ENCODE measurements at regions of chr9 and their contacts with region 1.

Region 1: DNA sequence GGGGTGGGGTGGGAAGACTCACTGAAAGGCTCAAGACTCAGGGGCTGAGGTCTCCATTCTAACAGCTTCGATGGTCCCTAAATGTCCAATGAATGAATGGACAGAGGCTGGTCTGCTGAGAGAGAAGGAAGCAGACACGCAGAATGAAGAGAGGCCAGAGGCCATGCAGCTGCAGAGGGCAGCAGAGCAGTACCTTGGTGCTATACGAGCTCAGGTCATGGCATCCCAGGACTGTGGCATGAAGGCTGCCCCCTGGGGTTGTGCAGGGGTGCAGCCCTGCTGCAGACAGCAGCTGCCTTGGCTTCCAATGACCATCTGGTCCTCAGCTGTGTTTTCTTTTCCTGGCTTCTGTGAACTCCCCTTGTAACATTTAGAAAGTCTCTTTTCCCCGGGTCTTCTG is 15.2 kb upstream of the CORO2A start:
- DNase-seq: no peak
- ATAC-seq: no peak
- H3K4me3 ChIP-seq: no peak overlapping the region
- H3K27ac ChIP-seq: no peak overlapping the region
- H3K4me1 ChIP-seq: peaks cover 0 to 9% (median 1%) of the 10 kb centered on the region in 12 donors
- H3K27me3 ChIP-seq: no peaks in the 10 kb centered on the region
- CTCF ChIP-seq: no peak
- POLR2A ChIP-seq: no peak

Region 2: DNA sequence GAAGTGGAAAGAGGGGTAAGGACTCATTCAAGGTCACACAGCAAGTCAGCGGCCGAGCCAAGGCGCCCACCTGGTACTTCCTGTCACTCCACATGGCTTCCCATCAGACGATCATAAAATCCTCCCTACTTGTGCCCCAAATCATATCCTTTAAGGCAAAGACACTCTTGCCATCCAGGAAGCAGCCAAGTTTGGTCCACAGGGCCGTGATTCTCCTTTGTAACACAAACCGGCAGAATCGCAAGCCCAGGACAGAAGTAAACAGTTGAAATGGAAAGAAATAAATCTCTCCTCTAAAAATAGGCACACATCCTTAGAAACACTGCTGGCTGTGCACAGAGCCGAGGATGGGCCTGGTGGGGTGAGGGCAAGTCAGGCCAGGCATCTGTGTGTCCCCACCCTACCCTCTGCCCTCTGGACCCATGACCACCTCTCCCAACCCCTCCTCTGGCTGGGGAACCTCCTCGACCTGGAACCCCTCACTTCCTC is 675.7 kb before region 1 on chr9:
- intact Hi-C with region 1: no loop called
- DNase-seq: peak in 1 of 5 donors; percentile 30
- ATAC-seq: peak in 3 of 4 donors; percentile 3 to 24 (median 21)
- H3K4me3 ChIP-seq: no peak overlapping the region
- H3K27ac ChIP-seq: peak overlapping the region in 11 of 12 donors; percentile 44 to 91 (median 73)
- H3K4me1 ChIP-seq: peaks cover 0 to 71% (median 40%) of the 10 kb centered on the region in 12 donors
- H3K27me3 ChIP-seq: no peaks in the 10 kb centered on the region
- CTCF ChIP-seq: no peak
- POLR2A ChIP-seq: no peak

Region 3: GRCh38 chr9:98074115-98074990 is 133.3 kb before region 1 on chr9:
- intact Hi-C with region 1: loop called in 4 of 10 experiments (anchors 5 to 10 kb)
- DNase-seq: peak; percentile 41 to 70 (median 47)
- ATAC-seq: peak in 3 of 4 donors; percentile 33 to 62 (median 56)
- H3K4me3 ChIP-seq: no peak overlapping the region
- H3K27ac ChIP-seq: peak overlapping the region in 2 of 12 donors; percentile 23 to 37
- H3K4me1 ChIP-seq: peaks cover 0 to 21% (median 6%) of the 10 kb centered on the region in 12 donors
- H3K27me3 ChIP-seq: no peaks in the 10 kb centered on the region
- CTCF ChIP-seq: peak; percentile 81 to 98 (median 94)
- POLR2A ChIP-seq: no peak

Region 4: GRCh38 chr9:98438666-98439065 is 231.1 kb after region 1 on chr9:
- intact Hi-C with region 1: no loop called
- DNase-seq: no peak
- ATAC-seq: no peak
- H3K4me3 ChIP-seq: no peak overlapping the region
- H3K27ac ChIP-seq: no peak overlapping the region
- H3K4me1 ChIP-seq: no peaks in the 10 kb centered on the region
- H3K27me3 ChIP-seq: peaks cover 0 to 12% (median 0%) of the 10 kb centered on the region in 9 donors
- CTCF ChIP-seq: no peak
- POLR2A ChIP-seq: no peak

Region 5: DNA sequence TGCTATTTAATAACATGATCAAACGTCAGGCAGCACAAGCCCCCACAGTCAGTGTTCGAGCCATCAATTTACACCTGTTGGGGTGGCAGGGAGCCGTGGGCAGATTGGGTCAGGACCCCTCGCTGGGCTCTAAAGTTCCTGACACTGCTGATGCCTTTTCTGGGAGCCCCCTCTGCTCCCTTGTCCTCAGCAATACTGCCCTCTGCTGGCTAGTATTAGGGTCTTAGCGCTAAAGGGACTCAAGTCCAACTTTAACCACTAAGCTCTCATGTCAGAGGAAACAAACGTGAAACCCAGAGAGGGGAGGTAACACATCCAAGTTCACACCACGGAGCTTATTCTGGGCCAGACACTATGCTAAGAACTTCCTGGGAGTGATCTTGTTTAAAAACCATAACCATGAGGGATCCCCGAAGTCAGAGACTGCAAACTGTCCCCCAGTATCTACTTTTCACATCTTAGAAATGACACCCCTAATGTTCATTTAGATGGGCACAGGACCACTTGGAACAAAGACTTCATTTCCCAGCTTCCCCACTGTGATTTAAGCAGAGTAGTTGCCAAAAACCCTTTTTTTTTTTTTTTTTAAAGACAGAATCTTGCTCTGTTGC is 568.3 kb after region 1 on chr9:
- intact Hi-C with region 1: loop called in 2 of 10 experiments (anchors 10 kb)
- DNase-seq: peak in 1 of 5 donors; percentile 35
- ATAC-seq: peak in 1 of 4 donors; percentile 49
- H3K4me3 ChIP-seq: no peak overlapping the region
- H3K27ac ChIP-seq: no peak overlapping the region
- H3K4me1 ChIP-seq: no peaks in the 10 kb centered on the region
- H3K27me3 ChIP-seq: no peaks in the 10 kb centered on the region
- CTCF ChIP-seq: peak; percentile 47 to 81 (median 69)
- POLR2A ChIP-seq: no peak

Region 6: DNA sequence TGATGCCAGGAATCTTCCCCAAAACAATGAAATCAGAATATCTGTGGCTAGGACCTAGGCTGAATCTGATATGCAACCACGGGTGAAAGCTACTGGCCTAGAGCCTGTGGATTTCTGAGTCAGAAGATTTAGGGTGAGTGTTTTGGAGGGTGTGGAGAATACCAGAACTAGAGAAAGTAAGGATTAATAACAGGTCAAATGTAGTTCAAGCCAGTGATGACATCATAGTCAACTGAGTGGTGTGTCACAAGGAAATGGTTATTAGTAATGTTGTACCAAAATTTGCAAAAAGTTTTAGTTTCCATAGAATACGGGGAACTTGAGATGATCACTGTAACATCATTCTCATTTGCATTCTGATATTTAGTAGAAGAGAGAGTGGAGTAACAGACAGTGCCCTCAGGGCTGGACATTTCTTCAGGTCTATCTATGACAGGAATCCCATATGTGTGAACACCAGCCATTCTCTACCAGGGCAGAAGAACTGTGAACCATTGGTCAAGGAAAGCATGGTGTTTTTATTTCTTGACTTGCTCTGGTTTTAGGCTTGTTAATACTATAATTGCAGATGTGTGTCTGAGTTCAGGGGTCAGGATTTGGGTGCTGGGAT is 603.5 kb after region 1 on chr9:
- intact Hi-C with region 1: no loop called
- DNase-seq: no peak
- ATAC-seq: no peak
- H3K4me3 ChIP-seq: no peak overlapping the region
- H3K27ac ChIP-seq: no peak overlapping the region
- H3K4me1 ChIP-seq: peaks cover 0 to 16% (median 8%) of the 10 kb centered on the region in 12 donors
- H3K27me3 ChIP-seq: peaks cover 0 to 24% (median 12%) of the 10 kb centered on the region in 9 donors
- CTCF ChIP-seq: no peak
- POLR2A ChIP-seq: no peak

Measured in heart left ventricle (tissue), 16 donors.